Uterus (tissue), 4 donors: ENCODE measurements at regions of chr18 and their contacts with region 1.

Region 1: GRCh38 chr18:23629444-23629946 is 33.2 kb downstream of the ANKRD29 start:
- DNase-seq: no peak
- H3K4me3 ChIP-seq: no peak overlapping the region
- H3K27ac ChIP-seq: no peak overlapping the region
- H3K4me1 ChIP-seq: no peaks in the 10 kb centered on the region
- H3K27me3 ChIP-seq: no peaks in the 10 kb centered on the region
- CTCF ChIP-seq: no peak
- POLR2A ChIP-seq: no peak

Region 2: DNA sequence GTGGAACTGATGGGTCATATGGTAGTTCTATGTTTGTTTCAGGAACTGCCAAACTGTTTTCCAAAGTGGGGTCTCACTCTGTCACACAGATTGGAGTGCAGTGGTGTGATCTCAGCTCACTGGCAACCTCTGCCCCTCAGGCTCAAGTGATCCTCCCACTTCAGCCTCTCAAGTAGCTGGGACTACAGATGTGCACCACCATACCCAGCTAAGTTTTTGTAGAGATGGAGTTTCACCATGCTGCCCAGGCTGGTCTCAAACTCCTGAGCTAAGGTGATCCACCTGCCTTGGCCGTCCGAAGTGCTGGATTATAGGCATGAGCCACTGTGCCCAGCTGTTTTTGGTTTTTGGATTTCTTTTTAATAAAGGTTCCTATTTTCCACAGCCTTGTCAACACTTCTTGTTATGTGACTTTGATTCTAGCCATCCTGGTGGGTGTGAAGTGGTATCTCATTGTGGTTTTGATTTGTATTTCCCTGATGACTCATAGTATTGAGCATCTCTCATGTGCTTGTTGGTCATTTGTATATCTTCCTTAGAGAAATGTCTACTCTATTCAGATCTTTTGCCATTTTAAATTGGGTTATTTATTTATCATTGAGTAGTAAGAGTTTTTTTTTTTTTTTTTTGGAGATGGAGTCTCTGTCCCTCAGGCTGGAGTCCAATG is 66.0 kb before region 1 on chr18:
- intact Hi-C with region 1: no loop called
- DNase-seq: no peak
- H3K4me3 ChIP-seq: no peak overlapping the region
- H3K27ac ChIP-seq: no peak overlapping the region
- H3K4me1 ChIP-seq: no peaks in the 10 kb centered on the region
- H3K27me3 ChIP-seq: no peaks in the 10 kb centered on the region
- CTCF ChIP-seq: no peak
- POLR2A ChIP-seq: no peak

Region 3: DNA sequence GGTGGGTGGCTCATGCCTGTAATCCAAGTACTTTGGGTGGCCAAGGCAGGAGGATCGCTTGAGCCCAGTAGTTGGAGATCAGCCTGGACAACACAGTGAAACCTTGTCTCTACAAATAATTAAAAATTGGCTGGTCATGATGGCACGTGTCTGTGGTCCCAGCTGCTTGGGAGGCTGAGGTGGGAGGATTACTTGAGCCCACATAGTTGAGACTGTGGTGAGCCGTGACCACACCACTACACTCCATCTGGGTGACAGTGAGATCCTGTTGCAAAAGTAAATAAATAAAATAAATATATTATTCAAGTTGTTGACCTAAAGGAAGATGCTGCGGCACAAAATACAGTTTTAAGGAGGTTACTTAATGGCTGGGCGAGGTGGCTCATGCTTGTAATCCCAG is 132.4 kb after region 1 on chr18:
- intact Hi-C with region 1: no loop called
- DNase-seq: no peak
- H3K4me3 ChIP-seq: no peak overlapping the region
- H3K27ac ChIP-seq: no peak overlapping the region
- H3K4me1 ChIP-seq: no peaks in the 10 kb centered on the region
- H3K27me3 ChIP-seq: no peaks in the 10 kb centered on the region
- CTCF ChIP-seq: no peak
- POLR2A ChIP-seq: no peak

Region 4: DNA sequence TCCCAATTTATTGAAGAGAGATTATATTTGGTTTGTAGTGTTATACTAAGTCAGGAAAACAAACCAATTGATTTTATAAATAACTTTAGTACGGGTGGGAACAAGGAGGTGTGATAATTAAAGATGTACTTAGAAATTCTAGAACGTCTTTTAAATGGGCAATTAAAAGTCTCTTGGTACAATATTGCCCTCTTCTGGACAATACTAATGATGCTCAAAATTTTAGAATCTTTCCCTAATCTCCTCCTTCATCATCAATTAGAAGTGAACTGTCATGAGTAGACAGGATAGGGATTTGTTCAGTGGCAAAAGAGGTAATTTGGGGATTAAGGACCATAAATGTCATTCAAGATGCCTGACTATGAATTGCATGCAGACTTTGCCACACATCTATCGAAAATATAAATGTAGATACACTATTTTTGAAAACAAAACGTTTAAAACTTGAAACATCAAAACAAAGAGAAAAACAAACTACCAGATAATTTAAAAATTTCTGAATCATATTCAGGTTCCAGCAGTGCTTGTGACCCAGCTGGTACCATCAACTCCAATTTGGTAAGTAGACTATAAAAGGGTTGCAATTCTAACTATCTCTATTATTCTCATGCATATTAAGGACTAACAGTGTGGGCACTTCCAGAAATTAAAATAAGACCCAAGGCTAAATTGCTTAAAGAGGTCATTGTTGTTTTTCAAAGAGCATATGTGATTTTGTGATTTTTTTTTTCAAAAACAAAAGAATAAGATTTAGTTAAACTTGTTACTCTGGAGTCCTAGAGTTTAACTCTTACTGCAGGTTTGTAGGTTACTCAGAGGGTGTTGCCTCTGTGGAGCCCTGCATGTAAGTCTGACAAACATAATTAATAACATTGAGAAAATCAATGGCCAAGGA is 183.3 kb after region 1 on chr18:
- intact Hi-C with region 1: loop called (anchors 10 kb)
- DNase-seq: no peak
- H3K4me3 ChIP-seq: no peak overlapping the region
- H3K27ac ChIP-seq: no peak overlapping the region
- H3K4me1 ChIP-seq: no peaks in the 10 kb centered on the region
- H3K27me3 ChIP-seq: no peaks in the 10 kb centered on the region
- CTCF ChIP-seq: peak; percentile 44 to 60 (median 48)
- POLR2A ChIP-seq: no peak